ENCODE measurements at regions of chr20 and their contacts with region 1.

Region 1: GRCh38 chr20:62500237-62500864 is 24.6 kb upstream of the GATA5 start:
- DNase-seq: peak; percentile 43 to 89 (median 75)

Region 2: DNA sequence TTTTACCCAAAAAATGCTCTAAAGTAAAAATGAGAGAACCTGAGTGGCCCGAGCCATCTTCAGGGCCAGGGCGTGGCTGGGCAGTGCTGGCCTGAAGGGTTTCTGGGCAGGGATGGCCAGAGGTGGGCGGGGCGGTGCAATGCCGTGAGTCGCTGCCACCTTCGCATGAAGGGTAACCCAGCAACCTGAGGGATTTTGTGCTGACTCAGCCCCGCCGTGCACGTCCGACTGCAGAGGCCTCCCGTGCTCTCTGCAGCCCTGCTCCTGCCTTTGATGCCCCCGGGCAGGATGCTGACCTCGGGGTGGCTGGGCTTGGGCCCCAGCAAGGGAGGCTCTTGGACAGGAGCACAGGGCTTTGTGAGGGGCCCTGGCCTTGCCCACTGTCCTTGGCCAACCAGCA is 57.1 kb after region 1 on chr20:
- intact Hi-C with region 1: no loop called
- DNase-seq: no peak

Region 3: GRCh38 chr20:62616728-62617621 is 116.6 kb after region 1 on chr20:
- intact Hi-C with region 1: loop called (anchors 10 kb)
- DNase-seq: peak; percentile 32 to 85 (median 70)

Region 4: DNA sequence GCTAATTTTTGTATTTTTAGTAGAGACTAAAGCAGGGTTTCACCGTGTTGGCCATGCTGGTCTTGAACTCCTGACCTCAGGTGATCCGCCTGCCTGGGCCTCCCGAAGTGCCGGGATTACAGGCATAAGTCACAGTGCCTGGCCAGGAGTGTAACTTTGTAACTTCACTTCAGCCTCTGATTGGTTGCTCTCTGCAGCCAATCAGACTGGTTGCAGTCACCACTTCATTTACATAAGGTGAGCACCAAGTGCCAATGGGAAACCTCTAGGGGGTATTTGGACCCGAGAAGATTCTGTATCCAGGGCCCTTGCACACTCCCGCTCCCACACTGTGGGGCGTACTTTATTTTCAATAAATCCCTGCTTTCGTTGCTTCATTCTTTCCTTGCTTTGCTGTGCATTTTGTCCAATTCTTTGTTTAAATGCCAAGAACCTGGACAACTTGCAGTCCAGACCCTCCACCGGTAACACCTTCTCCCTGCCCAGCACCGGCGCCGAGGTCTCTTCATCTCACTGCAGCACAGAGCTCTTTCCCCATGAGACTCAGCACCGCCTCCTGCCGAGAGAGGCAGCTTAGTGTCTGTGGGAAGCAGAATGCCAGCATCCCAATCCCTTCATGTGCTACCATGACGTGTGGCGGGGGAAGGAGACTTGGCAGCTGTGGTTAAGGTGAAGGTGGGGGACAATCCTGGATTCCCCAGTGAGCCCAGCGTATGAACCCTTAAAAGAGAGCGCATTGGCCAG is 282.0 kb after region 1 on chr20:
- intact Hi-C with region 1: loop called (anchors 10 kb)
- DNase-seq: no peak